AG04449 (cell line): ENCODE measurements at regions of chr16 and their contacts with region 1.

Region 1: GRCh38 chr16:53892155-53892554 is 188.2 kb downstream of the FTO start:
- DNase-seq: peak; percentile 65
- H3K4me3 ChIP-seq: no peak overlapping the region
- CTCF ChIP-seq: peak; percentile 70

Region 2: GRCh38 chr16:53822936-53823529 is 69.1 kb before region 1 on chr16:
- CTCF ChIA-PET with region 1: interaction called, 12 read pairs
- POLR2A ChIA-PET with region 1: no interaction called
- DNase-seq: no peak
- H3K4me3 ChIP-seq: no peak overlapping the region
- CTCF ChIP-seq: no peak

Region 3: GRCh38 chr16:53881371-53881770 is 10.8 kb before region 1 on chr16:
- CTCF ChIA-PET with region 1: interaction called, 51 read pairs
- POLR2A ChIA-PET with region 1: no interaction called
- DNase-seq: peak; percentile 38
- H3K4me3 ChIP-seq: no peak overlapping the region
- CTCF ChIP-seq: no peak

Region 4: GRCh38 chr16:53913099-53913870 is 21.1 kb after region 1 on chr16:
- CTCF ChIA-PET with region 1: no interaction called
- POLR2A ChIA-PET with region 1: no interaction called
- DNase-seq: peak; percentile 69
- H3K4me3 ChIP-seq: no peak overlapping the region
- CTCF ChIP-seq: no peak

Region 5: GRCh38 chr16:53968454-53968853 is 76.3 kb after region 1 on chr16:
- CTCF ChIA-PET with region 1: no interaction called
- POLR2A ChIA-PET with region 1: no interaction called
- DNase-seq: no peak
- H3K4me3 ChIP-seq: no peak overlapping the region
- CTCF ChIP-seq: no peak